K562 (cell line): ENCODE measurements at regions of chr2 and their contacts with region 1.

Region 1: GRCh38 chr2:189347540-189347939 is 93.7 kb upstream of the WDR75 start:
- DNase-seq: peak; percentile 25 to 75 (median 46)
- ATAC-seq: peak; percentile 97
- H3K4me3 ChIP-seq: no peak overlapping the region
- H3K27ac ChIP-seq: no peak overlapping the region; the same call in 2 of the 3 replicates
- H3K4me1 ChIP-seq: peaks cover 0 to 7% of the 10 kb centered on the region in 2 experiments; a peak in 2 of 5 replicates
- H3K27me3 ChIP-seq: no peaks in the 10 kb centered on the region
- CTCF ChIP-seq: peak; percentile 45 to 58 (median 58); a peak in 5 of 6 replicates
- EP300 ChIP-seq: no peak
- POLR2A ChIP-seq: no peak
- RAD21 ChIP-seq: peak; percentile 63 to 64

Region 2: GRCh38 chr2:189096769-189097447 is 250.6 kb before region 1 on chr2:
- CTCF ChIA-PET with region 1: no interaction called
- POLR2A ChIA-PET with region 1: no interaction called
- in situ Hi-C with region 1: no loop called
- intact Hi-C with region 1: loop called (anchors 1 kb)
- DNase-seq: no peak
- ATAC-seq: no peak
- H3K4me3 ChIP-seq: no peak overlapping the region
- H3K27ac ChIP-seq: no peak overlapping the region
- H3K4me1 ChIP-seq: no peaks in the 10 kb centered on the region
- H3K27me3 ChIP-seq: no peaks in the 10 kb centered on the region
- CTCF ChIP-seq: no peak
- EP300 ChIP-seq: no peak
- POLR2A ChIP-seq: no peak
- RAD21 ChIP-seq: no peak

Region 3: GRCh38 chr2:189142893-189143759 is 204.4 kb before region 1 on chr2:
- CTCF ChIA-PET with region 1: no interaction called
- POLR2A ChIA-PET with region 1: no interaction called
- in situ Hi-C with region 1: no loop called
- intact Hi-C with region 1: loop called (anchors 2 kb)
- DNase-seq: peak; percentile 24 to 66 (median 32)
- ATAC-seq: peak; percentile 96
- H3K4me3 ChIP-seq: no peak overlapping the region
- H3K27ac ChIP-seq: no peak overlapping the region
- H3K4me1 ChIP-seq: no peaks in the 10 kb centered on the region
- H3K27me3 ChIP-seq: no peaks in the 10 kb centered on the region
- CTCF ChIP-seq: peak; percentile 84 to 99 (median 99)
- EP300 ChIP-seq: no peak
- POLR2A ChIP-seq: no peak
- RAD21 ChIP-seq: peak; percentile 66 to 73

Region 4: GRCh38 chr2:189521699-189522434 is 174.3 kb after region 1 on chr2:
- CTCF ChIA-PET with region 1: no interaction called
- POLR2A ChIA-PET with region 1: no interaction called
- in situ Hi-C with region 1: no loop called
- intact Hi-C with region 1: no loop called
- DNase-seq: peak; percentile 12 to 58 (median 19)
- ATAC-seq: peak; percentile 65
- H3K4me3 ChIP-seq: no peak overlapping the region
- H3K27ac ChIP-seq: no peak overlapping the region
- H3K4me1 ChIP-seq: peaks cover 0 to 37% of the 10 kb centered on the region in 2 experiments
- H3K27me3 ChIP-seq: no peaks in the 10 kb centered on the region
- CTCF ChIP-seq: peak in 2 of 3 experiments; percentile 14 to 19; a peak in 1 of 6 replicates
- EP300 ChIP-seq: peak; percentile 30; the same call in 1 of the 2 replicates
- POLR2A ChIP-seq: no peak
- RAD21 ChIP-seq: no peak